ENCODE measurements at regions of chr9 and their contacts with region 1.

Region 1: DNA sequence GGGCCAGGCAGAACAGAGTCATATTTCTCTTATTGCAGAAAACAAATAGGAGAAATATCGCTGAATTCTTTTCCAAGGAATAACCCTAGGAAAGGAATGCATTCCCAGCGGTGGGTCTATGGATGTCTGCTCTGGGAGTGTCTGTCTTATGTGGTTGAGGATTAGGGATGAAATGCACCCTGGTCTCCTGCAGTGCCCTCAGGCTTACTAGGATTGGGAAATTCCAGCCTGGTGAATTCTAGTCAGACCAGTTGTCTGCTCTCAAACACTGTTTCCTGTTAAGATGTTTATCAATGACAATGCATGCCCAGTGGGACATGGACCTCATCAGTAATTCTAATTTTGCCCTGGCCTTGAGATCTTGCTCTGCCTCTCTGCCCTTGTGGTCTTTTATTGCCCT is 136.1 kb upstream of the ELAVL2 start:
- DNase-seq: no peak
- H3K4me3 Mint-ChIP-seq: no peak overlapping the region
- H3K27ac Mint-ChIP-seq: no peak overlapping the region
- H3K4me1 Mint-ChIP-seq: no peaks in the 10 kb centered on the region
- H3K27me3 Mint-ChIP-seq: no peaks in the 10 kb centered on the region

Region 2: GRCh38 chr9:23907343-23907742 is 54.8 kb before region 1 on chr9:
- intact Hi-C with region 1: loop called (anchors 10 kb)
- DNase-seq: no peak
- H3K4me3 Mint-ChIP-seq: no peak overlapping the region
- H3K27ac Mint-ChIP-seq: no peak overlapping the region
- H3K4me1 Mint-ChIP-seq: no peaks in the 10 kb centered on the region
- H3K27me3 Mint-ChIP-seq: no peaks in the 10 kb centered on the region

Measured in activated T-helper 1 cell treated with anti-CD3 and anti-CD28 coated beads, Interleukin-12 subunit alpha, Interleukin-12 subunit beta, Interleukin-2, Interleukin-4 antibody, amounts not matched to agents 30 ng/mL and 10 ng/mL and 1 ng/mL, durations not matched to agents 14 hours and 24 hours and 36 hours (primary cell).